ENCODE measurements at regions of chr3 and their contacts with region 1.

Region 1: DNA sequence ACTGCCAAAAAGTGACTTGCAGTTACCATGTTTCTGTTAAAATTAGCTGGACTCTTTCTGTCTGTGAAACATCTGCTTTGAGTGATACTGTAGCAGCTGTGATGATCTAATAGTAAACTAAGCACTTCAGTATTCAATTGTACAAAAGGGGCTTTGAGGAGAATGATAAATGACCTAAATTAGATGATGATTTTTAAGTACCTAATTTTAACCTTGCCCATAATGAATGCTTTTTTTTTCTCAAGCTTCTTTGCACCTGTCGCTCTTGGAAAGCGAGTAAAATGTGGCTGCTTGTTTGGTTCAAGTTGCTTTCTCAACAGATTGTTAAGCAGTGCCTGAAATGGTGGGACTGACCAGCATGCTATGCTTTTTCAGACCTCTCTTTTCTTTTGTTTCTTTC is 752.3 kb downstream of the EPHA3 start:
- DNase-seq: no peak
- H3K4me3 Mint-ChIP-seq: no peak overlapping the region
- H3K27ac Mint-ChIP-seq: no peak overlapping the region
- H3K4me1 Mint-ChIP-seq: no peaks in the 10 kb centered on the region
- H3K27me3 Mint-ChIP-seq: no peaks in the 10 kb centered on the region
- CTCF ChIP-seq: no peak

Region 2: DNA sequence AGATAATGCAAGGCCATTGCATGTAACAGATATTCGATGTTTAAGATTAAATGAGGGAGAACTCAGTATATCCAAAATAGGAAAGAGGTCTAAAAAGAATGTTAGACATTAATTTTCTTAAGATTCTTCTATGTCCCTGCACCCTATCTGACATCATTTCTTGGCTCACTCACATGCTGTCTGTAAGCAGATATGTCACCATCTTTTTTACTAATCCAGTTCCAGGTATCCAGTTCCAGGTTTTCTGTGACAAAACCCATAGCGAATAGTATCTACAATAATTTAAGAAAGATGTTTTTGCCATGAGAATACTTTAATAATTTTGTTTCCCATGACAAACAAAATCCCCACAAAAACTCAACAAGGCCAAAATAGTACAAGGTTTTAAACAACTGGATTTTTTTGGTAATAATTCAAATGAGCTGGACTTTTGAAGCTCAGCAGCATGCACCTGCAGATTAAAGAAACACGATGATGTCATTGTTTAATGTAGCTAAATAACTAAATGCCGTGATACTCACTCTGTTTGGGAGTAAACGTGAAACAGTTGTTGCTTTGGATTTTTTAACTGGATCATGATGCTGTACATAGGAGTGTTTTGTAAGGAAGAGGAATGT is 115.3 kb after region 1 on chr3:
- CTCF ChIA-PET with region 1: no interaction called
- intact Hi-C with region 1: loop called (anchors 10 kb)
- DNase-seq: no peak
- H3K4me3 Mint-ChIP-seq: no peak overlapping the region
- H3K27ac Mint-ChIP-seq: no peak overlapping the region
- H3K4me1 Mint-ChIP-seq: no peaks in the 10 kb centered on the region
- H3K27me3 Mint-ChIP-seq: no peaks in the 10 kb centered on the region
- CTCF ChIP-seq: no peak

Region 3: DNA sequence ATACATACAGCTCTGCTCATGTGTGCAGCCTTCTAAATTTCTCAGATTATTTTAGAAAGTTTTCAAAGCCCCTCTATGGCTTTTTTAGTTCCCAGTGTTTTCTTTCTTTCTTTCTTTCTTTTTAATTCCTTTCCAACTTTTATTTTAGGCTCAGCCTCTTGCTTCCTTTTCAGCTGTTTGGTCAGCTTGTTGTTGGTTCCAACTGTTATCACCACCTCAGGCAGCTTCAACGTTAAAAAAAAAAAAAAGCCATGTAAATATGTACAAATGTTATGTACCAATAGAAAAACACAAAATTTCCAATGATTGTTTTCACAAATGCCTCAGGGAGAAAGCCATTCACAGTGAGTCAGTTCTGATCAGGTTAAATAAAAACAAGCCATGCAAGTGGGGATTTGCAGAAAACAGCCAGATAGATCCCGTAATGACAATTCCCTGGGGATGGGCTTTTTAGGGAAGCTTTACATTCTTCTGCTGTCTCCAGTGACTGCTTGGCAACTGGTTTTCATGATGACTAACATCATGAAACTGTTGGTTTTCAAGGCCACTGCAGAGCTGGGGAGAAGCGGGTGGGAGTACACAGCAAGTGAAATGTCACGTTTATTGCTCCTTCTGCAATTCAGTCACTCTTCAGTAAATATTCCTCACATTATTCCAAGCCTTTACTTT is 156.1 kb after region 1 on chr3:
- CTCF ChIA-PET with region 1: no interaction called
- intact Hi-C with region 1: loop called (anchors 10 kb)
- DNase-seq: peak; percentile 2
- H3K4me3 Mint-ChIP-seq: no peak overlapping the region
- H3K27ac Mint-ChIP-seq: peak overlapping the region; percentile 52
- H3K4me1 Mint-ChIP-seq: peaks cover 18% of the 10 kb centered on the region
- H3K27me3 Mint-ChIP-seq: no peaks in the 10 kb centered on the region
- CTCF ChIP-seq: no peak

Measured in Calu3 (cell line).